MCF 10A (cell line): ENCODE measurements at regions of chr7 and their contacts with region 1.

Region 1: GRCh38 chr7:128425850-128426249 is 16.1 kb upstream of the IMPDH1 start:
- DNase-seq: peak; percentile 75
- H3K4me3 Mint-ChIP-seq: no peak overlapping the region
- H3K27ac Mint-ChIP-seq: no peak overlapping the region
- H3K4me1 Mint-ChIP-seq: peaks cover 11% of the 10 kb centered on the region
- H3K27me3 Mint-ChIP-seq: no peaks in the 10 kb centered on the region
- CTCF ChIP-seq: peak; percentile 95

Region 2: DNA sequence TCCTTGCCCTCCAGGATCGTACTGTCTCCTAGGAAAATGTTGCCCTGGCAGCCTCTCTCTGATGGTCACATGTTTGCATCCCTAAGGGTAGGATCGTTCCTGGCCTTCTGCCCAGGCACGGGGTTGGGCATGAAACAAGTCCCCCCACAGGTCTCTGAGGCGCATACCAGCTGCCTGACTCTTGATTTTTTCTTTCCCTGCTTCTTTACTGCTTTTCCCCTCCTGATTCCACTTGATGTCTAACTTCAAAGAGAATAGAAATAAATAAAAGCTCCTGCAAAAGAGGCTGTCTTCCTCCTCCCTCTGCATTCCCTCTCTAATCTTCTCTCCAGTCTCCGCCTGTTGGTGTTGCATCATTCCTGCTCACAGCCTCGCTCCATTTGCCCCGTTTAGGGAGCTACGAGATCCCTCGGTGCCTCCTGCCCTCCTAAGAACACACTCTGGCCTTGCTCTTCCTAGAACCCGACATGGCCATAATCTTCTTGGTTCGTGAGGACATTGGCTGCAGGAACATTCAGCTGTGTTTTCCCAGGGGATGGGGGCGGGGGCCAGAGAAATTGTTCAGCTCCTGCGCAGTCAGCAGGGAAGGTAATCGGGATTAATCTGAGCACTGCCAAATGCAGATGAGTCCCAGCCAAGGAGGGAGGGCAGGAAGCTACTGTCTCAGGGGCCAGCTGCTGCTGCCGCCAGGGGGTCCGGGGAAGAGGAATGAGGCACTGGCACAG is 158.8 kb before region 1 on chr7:
- CTCF ChIA-PET with region 1: no interaction called
- POLR2A ChIA-PET with region 1: no interaction called
- intact Hi-C with region 1: no loop called
- DNase-seq: peak; percentile 90
- H3K4me3 Mint-ChIP-seq: peak overlapping the region; percentile 65
- H3K27ac Mint-ChIP-seq: peak overlapping the region; percentile 93
- H3K4me1 Mint-ChIP-seq: peaks cover 16% of the 10 kb centered on the region
- H3K27me3 Mint-ChIP-seq: no peaks in the 10 kb centered on the region
- CTCF ChIP-seq: no peak

Region 3: GRCh38 chr7:128343554-128344430 is 82.1 kb before region 1 on chr7 and contains the start of gene RBM28:
- CTCF ChIA-PET with region 1: interaction called, 74 read pairs
- POLR2A ChIA-PET with region 1: no interaction called
- intact Hi-C with region 1: loop called (anchors 1 kb)
- DNase-seq: peak; percentile 95
- H3K4me3 Mint-ChIP-seq: peak within 1 kb of the TSS; percentile 94
- H3K27ac Mint-ChIP-seq: peak within 1 kb of the TSS; percentile 96
- H3K4me1 Mint-ChIP-seq: peaks cover 8% of the 10 kb centered on the region
- H3K27me3 Mint-ChIP-seq: peaks cover 7% of the 10 kb centered on the region
- CTCF ChIP-seq: no peak
- total RNA-seq, gene RBM28: 61.5 and 63.8 TPM in 2 replicates

Region 4: GRCh38 chr7:128387216-128388144 is 38.4 kb before region 1 on chr7:
- CTCF ChIA-PET with region 1: interaction called, 45 read pairs
- POLR2A ChIA-PET with region 1: no interaction called
- intact Hi-C with region 1: no loop called
- DNase-seq: peak; percentile 78
- H3K4me3 Mint-ChIP-seq: no peak overlapping the region
- H3K27ac Mint-ChIP-seq: no peak overlapping the region
- H3K4me1 Mint-ChIP-seq: peaks cover 11% of the 10 kb centered on the region
- H3K27me3 Mint-ChIP-seq: no peaks in the 10 kb centered on the region
- CTCF ChIP-seq: peak; percentile 89

Region 5: DNA sequence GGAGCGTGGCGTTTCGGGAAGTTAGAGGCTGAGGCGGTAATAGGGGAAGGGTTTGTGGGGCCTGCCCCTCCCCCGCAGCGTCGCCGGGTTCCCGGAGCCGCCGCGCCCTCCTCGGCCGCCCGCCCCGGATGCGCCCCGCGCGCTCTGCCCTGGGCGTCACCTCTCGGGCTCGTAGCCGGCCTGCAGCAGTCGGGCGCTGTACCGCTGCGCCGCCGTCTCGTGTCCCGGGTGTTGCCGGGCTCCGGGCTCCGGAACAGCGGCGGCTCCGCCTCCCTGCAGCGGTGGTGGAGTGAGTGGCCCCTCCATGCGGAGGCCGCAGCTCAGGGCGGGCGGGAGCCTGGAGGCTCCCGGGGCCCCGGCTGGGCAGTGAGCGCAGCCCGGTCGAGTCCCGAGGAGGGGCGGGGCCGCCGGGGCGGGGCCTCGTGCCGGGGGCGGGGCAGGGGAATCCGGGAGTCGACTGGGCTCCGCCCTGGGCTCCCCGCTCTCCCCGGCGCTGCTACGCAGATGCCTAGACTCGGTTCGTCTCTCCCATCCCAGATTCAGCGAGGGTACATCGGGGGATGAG is 16.2 kb before region 1 on chr7 and contains the start of gene IMPDH1:
- CTCF ChIA-PET with region 1: interaction called, 187 read pairs
- POLR2A ChIA-PET with region 1: interaction called, 9 read pairs
- intact Hi-C with region 1: no loop called
- DNase-seq: peak; percentile 78
- H3K4me3 Mint-ChIP-seq: peak within 1 kb of the TSS; percentile 86
- H3K27ac Mint-ChIP-seq: peak within 1 kb of the TSS; percentile 51
- H3K4me1 Mint-ChIP-seq: peaks cover 5% of the 10 kb centered on the region
- H3K27me3 Mint-ChIP-seq: no peaks in the 10 kb centered on the region
- CTCF ChIP-seq: no peak
- total RNA-seq, gene IMPDH1: 66.4 and 74.0 TPM in 2 replicates

Region 6: GRCh38 chr7:128447941-128448564 is 22.2 kb after region 1 on chr7:
- CTCF ChIA-PET with region 1: interaction called, 129 read pairs
- POLR2A ChIA-PET with region 1: no interaction called
- intact Hi-C with region 1: no loop called
- DNase-seq: no peak
- H3K4me3 Mint-ChIP-seq: no peak overlapping the region
- H3K27ac Mint-ChIP-seq: no peak overlapping the region
- H3K4me1 Mint-ChIP-seq: peaks cover 6% of the 10 kb centered on the region
- H3K27me3 Mint-ChIP-seq: peaks cover 26% of the 10 kb centered on the region
- CTCF ChIP-seq: no peak

Region 7: GRCh38 chr7:128883622-128884501 is 458.0 kb after region 1 on chr7:
- CTCF ChIA-PET with region 1: interaction called, 3 read pairs
- POLR2A ChIA-PET with region 1: no interaction called
- intact Hi-C with region 1: loop called (anchors 5 kb)
- DNase-seq: peak; percentile 76
- H3K4me3 Mint-ChIP-seq: no peak overlapping the region
- H3K27ac Mint-ChIP-seq: no peak overlapping the region
- H3K4me1 Mint-ChIP-seq: no peaks in the 10 kb centered on the region
- H3K27me3 Mint-ChIP-seq: no peaks in the 10 kb centered on the region
- CTCF ChIP-seq: peak; percentile 90